Activated T-helper 1 cell treated with anti-CD3 and anti-CD28 coated beads, Interleukin-12 subunit alpha, Interleukin-12 subunit beta, Interleukin-2, Interleukin-4 antibody, amounts not matched to agents 30 ng/mL and 10 ng/mL and 1 ng/mL, durations not matched to agents 14 hours and 24 hours and 36 hours (primary cell): ENCODE measurements at regions of chr5 and their contacts with region 1.

Region 1: GRCh38 chr5:80093796-80094195 is 58.6 kb downstream of the THBS4 start:
- DNase-seq: no peak
- H3K4me3 Mint-ChIP-seq: no peak overlapping the region
- H3K27ac Mint-ChIP-seq: no peak overlapping the region
- H3K4me1 Mint-ChIP-seq: peaks cover 15% of the 10 kb centered on the region
- H3K27me3 Mint-ChIP-seq: no peaks in the 10 kb centered on the region

Region 2: DNA sequence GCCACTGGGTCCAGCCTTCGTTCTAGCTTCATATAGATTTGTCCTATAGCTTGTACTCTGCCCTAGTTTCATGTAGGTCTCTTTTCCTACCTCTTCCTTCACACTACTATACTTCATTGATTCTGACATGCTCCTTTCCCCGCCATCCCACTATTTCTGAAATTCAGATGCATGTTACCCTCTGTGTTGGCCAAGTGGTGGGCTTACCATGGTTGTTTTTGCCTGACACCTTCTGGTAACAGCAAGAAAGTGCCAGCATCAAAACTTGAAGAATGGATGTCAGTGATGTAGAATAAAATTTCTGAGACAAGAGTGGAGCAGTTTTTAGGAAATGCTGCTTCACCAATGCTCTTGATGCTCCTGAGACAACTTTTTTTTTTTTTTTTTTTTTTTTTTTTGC is 181.6 kb after region 1 on chr5:
- intact Hi-C with region 1: loop called (anchors 1 kb)
- DNase-seq: no peak
- H3K4me3 Mint-ChIP-seq: no peak overlapping the region
- H3K27ac Mint-ChIP-seq: no peak overlapping the region
- H3K4me1 Mint-ChIP-seq: peaks cover 13% of the 10 kb centered on the region
- H3K27me3 Mint-ChIP-seq: no peaks in the 10 kb centered on the region

Region 3: DNA sequence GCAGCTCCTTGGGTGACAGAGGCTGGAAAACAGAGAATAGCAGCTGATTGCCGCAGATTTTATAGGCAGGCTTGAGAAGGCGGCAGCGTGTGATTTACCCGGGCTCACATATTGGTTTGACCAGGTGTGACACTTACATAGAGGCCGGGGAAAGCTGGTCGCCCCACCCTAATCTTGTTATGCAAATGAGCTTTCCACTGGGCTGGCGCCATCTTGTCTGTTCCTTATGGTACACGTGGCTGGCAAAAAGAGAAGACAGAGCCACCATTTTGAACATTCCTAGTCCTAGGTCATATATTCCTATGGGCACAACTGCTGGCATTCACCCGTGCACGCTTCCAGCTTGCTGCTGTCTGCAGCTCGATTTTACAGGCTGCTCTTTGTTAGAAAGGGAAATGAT is 214.7 kb after region 1 on chr5:
- intact Hi-C with region 1: loop called (anchors 1 kb)
- DNase-seq: no peak
- H3K4me3 Mint-ChIP-seq: no peak overlapping the region
- H3K27ac Mint-ChIP-seq: no peak overlapping the region
- H3K4me1 Mint-ChIP-seq: no peaks in the 10 kb centered on the region
- H3K27me3 Mint-ChIP-seq: peaks cover 8% of the 10 kb centered on the region